ENCODE measurements at regions of chr2 and their contacts with region 1.

Region 1: DNA sequence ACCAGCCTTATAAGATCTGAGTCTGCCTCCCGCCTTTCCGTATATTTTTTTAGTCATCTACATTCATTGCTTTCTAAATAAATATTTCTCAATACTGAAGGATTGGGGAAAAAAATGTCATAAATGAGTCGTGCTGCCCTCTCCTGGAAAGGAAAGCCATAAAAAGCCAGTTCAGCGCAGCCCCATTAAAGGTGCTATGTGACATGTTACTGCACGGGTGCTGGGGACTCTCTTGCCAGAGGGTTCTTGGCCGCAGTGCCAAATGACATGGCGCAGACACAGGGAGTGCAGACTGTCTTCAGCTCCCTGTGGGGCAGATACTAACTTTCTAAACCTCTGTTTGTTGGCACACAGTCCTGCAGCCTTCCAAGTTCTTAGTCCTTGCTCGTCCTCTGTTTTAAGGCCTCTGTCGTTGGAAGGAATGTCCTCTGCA is 53.7 kb upstream of the MAP3K20 start:
- DNase-seq: peak; percentile 66
- ATAC-seq: peak; percentile 88

Region 2: DNA sequence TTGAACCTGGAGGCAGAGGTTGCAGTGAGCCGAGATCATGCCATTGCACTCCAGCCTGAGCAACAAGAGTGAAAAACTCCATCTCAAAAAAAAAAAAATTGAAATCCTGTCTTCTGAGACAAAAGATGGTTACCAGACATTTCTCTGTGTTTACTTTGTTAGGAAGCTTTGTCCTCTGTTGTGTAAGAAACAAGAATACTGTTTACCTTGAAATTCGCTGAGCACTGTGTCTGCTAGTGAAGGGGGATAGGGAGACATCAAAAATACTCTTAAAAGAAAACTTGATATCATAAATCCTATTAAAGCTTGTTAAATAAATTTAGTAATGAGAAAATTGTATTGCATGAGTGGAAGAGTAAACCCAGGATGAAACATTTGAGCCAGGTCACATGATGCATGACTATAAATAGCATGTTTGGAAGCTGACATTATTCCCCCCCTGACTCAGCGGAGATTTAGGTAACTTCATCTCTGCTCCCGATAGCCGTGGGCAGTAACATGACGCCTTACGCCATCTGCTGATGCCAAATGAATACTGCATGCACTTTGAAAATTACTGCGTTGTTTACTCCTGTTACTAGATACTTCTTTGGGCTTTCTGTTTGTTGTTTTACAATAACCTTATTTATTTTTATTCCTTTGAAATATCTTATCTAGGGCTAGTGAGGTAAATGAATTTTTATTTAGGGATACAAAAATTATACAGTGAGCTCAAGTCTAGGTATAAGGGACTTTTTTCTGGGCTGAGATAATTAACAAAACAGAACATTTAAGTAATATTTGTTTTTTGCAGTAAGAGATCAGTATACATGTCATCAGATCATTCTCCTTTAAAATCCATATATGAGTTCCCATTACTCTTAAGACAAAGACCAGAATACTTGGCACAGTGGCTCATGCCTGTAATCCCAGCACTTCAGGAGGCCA is 188.6 kb after region 1 on chr2:
- intact Hi-C with region 1: loop called (anchors 2 kb)
- DNase-seq: peak; percentile 53
- ATAC-seq: peak; percentile 88

Measured in Right ventricle myocardium superior (tissue), 1 donor.